Mammary epithelial cell (primary cell): ENCODE measurements at regions of chr11 and their contacts with region 1.

Region 1: DNA sequence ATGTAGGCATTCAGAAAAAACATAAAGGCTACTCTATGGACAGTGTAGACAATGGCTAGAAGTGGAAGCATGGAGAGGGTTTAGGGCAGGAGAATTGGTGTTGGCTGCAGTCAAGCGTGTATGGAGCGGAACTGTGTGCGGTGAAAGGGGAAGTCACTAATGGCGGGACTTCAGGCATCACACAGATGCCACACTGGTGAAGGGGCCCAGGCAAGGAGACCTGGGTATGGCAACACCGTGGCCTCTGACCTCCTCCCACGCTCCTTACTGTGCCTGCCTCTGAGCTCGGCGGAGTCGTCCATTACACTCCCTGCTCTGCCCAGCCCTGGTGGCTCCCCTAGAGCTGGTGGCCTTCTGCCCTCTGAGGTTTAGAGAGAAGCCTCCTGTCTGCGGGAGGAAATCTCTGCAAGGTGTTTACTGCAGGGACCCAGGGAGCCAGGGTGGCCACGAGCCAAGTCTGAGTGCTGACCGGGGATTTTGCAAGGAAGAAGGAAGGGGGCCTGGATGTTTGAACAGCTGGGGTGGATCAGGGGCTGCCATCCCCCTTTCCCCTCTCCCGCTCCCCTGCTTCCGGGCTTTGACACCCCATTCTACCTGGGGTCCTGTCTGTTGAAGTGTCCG is 75.1 kb upstream of the TSPAN18 start:
- DNase-seq: no peak
- H3K4me3 ChIP-seq: no peak overlapping the region
- H3K27ac ChIP-seq: no peak overlapping the region
- H3K4me1 ChIP-seq: no peaks in the 10 kb centered on the region
- H3K27me3 ChIP-seq: peaks cover 2% of the 10 kb centered on the region
- CTCF ChIP-seq: no peak

Region 2: GRCh38 chr11:44698252-44698912 is 46.7 kb after region 1 on chr11:
- CTCF ChIA-PET with region 1: no interaction called
- dilution Hi-C with region 1: loop called (anchors 5 kb)
- in situ Hi-C with region 1: no loop called
- intact Hi-C with region 1: no loop called
- DNase-seq: no peak
- H3K4me3 ChIP-seq: no peak overlapping the region
- H3K27ac ChIP-seq: no peak overlapping the region
- H3K4me1 ChIP-seq: no peaks in the 10 kb centered on the region
- H3K27me3 ChIP-seq: no peaks in the 10 kb centered on the region
- CTCF ChIP-seq: no peak